Heart left ventricle (tissue), 16 donors: ENCODE measurements at regions of chrX and their contacts with region 1.

Region 1: DNA sequence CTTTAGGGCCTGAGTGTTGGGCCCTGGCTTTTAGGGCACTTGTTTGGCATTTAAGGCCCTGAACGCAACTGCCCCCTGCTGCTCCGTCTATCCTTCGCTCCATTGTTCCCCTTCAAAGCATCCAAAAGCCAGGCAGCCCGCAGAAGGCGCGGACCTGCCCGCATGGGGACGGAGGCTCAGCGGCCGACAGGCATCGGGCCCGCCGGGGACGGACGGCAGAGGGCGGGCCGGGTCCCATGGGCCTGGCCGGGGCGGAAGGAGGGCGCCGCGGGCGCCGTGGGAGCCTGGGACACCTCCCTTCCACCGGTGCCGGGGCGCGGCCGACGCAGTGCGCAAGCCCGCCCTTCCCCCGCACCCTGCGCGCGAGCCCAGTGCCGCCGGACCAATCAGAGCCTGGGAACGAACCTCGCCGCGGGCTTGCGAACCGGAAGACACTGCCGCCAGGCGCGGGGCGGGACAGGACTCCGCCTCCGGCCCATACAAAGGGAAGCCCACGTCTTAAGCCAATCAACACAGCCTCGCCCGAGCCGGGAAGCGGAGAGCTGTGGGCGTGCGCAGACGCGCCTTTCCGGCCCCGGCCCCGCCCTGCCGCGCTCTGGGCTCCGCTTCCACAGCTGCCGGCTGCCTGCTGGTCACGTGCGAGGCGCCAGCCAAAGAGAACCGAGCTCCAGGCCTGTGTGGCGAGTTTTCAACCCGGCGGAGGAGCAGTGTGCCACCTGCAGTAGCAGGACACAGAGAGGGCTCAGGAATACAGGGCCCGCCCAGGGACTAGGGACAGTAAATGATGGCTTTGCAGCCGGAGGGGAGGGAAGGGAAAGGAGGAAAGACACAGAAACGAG is 2.1 kb upstream of the ARHGAP4 start:
- DNase-seq: peak; percentile 94 to 98 (median 97)
- ATAC-seq: peak; percentile 93 to 97 (median 94)
- H3K4me3 ChIP-seq: peak overlapping the region; percentile 22 to 82 (median 62)
- H3K27ac ChIP-seq: peak overlapping the region; percentile 92 to 100 (median 96)
- H3K4me1 ChIP-seq: peaks cover 0 to 58% (median 22%) of the 10 kb centered on the region in 12 donors
- H3K27me3 ChIP-seq: peaks cover 0 to 15% (median 0%) of the 10 kb centered on the region in 9 donors
- CTCF ChIP-seq: peak in 8 of 12 donors; percentile 13 to 45 (median 22)
- POLR2A ChIP-seq: peak in 1 of 2 donors; percentile 78

Region 2: GRCh38 chrX:153724252-153725040 is 203.7 kb before region 1 on chrX and contains the starts of genes ABCD1 and BCAP31:
- intact Hi-C with region 1: loop called in 1 of 10 experiments (anchors 10 kb)
- DNase-seq: peak; percentile 90 to 94 (median 92)
- ATAC-seq: peak; percentile 73 to 86 (median 84)
- H3K4me3 ChIP-seq: peak within 1 kb of the TSS; percentile 49 to 95 (median 72)
- H3K27ac ChIP-seq: peak within 1 kb of the TSS; percentile 82 to 94 (median 90)
- H3K4me1 ChIP-seq: peaks cover 3 to 57% (median 41%) of the 10 kb centered on the region in 12 donors
- H3K27me3 ChIP-seq: peaks cover 0 to 6% (median 0%) of the 10 kb centered on the region in 9 donors
- CTCF ChIP-seq: no peak
- POLR2A ChIP-seq: peak in 1 of 2 donors; percentile 84
- total RNA-seq, gene ABCD1: 13.5 to 25.6 (median 17.6) TPM
- total RNA-seq, gene BCAP31: 59.9 to 162 (median 102) TPM

Region 3: DNA sequence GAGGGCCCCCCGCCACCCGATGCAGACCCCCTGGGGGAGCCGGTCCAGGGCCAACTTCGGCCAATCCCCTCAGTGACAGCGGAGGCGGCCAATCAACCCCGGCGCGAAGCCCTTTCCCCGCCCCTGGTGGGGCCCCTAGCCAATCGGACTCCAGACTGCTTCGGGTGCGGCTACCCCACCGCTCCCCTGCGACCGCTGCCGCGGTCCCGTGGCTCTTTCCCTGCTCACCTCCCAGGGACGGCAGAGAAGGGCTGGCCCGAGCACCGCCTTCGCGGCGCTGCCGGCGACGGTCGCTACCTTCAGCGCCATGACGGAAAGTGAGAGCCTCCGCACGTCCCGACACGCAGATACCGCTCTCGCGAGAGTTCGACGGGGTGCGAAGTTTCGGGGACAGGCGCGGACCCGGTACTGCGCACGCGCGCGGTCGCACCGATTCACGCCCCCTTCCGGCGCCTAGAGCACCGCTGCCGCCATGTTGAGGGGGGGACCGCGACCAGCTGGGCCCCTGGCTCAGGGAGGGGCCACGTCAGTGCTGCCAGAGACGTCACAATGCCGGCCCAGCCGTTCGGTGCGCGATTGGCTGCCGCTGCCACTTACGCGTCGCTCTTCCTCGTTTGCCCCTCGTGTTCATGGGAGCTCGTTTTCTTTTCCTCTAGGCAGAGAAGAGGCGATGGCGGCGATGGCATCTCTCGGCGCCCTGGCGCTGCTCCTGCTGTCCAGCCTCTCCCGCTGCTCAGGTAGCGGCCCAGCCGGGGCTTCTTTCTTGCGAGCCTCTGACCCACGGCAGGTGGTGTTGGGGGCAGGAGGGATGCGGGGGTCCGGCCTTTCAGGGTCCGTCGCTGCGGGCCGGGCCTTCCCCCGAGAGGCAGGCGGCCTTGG is 133.9 kb before region 1 on chrX and contains the starts of genes IDH3G and SSR4:
- intact Hi-C with region 1: loop called in 3 of 10 experiments (anchors 5 to 10 kb)
- DNase-seq: peak; percentile 92 to 96 (median 93)
- ATAC-seq: peak; percentile 94 to 97 (median 96)
- H3K4me3 ChIP-seq: peak within 1 kb of the TSS; percentile 46 to 91 (median 74)
- H3K27ac ChIP-seq: peak within 1 kb of the TSS; percentile 86 to 99 (median 96)
- H3K4me1 ChIP-seq: peaks cover 0 to 37% (median 20%) of the 10 kb centered on the region in 12 donors
- H3K27me3 ChIP-seq: peaks cover 0 to 4% (median 0%) of the 10 kb centered on the region in 9 donors
- CTCF ChIP-seq: peak in 8 of 12 donors; percentile 9 to 58 (median 33)
- POLR2A ChIP-seq: peak in 1 of 2 donors; percentile 46
- total RNA-seq, gene IDH3G: 58.1 to 162 (median 71.2) TPM
- total RNA-seq, gene SSR4: 119 to 225 (median 135) TPM

Region 4: GRCh38 chrX:153947009-153947769 is 19.0 kb after region 1 on chrX:
- intact Hi-C with region 1: loop called in 1 of 10 experiments (anchors 2 kb)
- DNase-seq: peak; percentile 62 to 87 (median 72)
- ATAC-seq: peak; percentile 53 to 77 (median 68)
- H3K4me3 ChIP-seq: no peak overlapping the region
- H3K27ac ChIP-seq: peak overlapping the region; percentile 35 to 86 (median 67)
- H3K4me1 ChIP-seq: peaks cover 0 to 36% (median 8%) of the 10 kb centered on the region in 12 donors
- H3K27me3 ChIP-seq: peaks cover 0 to 15% (median 0%) of the 10 kb centered on the region in 9 donors
- CTCF ChIP-seq: peak; percentile 67 to 95 (median 78)
- POLR2A ChIP-seq: no peak

Region 5: DNA sequence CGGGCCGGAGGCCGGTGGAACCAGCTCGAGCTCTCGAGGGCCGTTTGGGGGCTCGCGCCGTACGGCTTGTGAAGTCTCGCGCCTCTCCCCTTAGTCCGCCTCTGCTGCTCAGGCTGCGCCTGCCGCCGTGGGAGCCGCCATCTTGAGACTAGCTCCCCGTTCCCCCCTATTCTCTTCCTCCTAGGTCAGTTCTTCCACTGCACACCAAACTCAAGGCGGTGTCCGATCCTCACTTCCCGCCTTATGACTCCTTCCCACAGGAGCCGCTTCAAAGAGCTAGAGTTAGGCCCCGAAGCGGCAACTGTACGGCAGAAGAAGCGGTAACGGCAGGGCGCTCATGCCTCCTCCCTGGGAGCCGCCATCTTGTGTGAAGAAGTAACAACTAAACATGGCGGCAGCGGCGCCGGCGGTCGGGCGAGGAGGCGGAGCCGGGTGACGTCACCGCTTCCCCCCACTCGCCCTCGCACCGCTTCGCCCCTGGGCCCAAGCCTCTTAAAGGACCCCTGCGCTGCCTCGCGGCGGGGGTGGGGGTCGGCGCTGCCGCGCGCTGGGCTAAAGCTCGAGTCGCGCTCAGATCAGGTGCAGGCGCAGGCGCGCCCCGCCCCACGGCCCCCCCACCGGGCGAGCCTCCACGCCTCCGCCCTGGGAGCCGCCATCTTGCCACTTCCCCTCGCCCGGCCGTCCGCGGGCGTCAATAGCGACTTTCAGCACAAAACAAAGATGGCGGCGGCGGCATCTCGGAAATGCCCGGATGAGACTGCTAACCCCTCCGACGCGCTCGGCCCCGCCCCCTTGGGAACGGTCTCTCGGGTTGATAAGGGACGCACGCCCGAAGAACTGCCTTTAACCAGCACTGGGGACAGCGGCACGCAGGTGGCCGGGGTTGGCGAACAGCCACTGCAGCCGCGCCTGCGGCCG is 43.6 kb after region 1 on chrX and contains the start of gene HCFC1:
- intact Hi-C with region 1: loop called in 2 of 10 experiments (anchors 1 to 2 kb)
- DNase-seq: peak; percentile 91 to 97 (median 93)
- ATAC-seq: peak; percentile 56 to 76 (median 72)
- H3K4me3 ChIP-seq: peak within 1 kb of the TSS; percentile 43 to 95 (median 90)
- H3K27ac ChIP-seq: peak within 1 kb of the TSS; percentile 94 to 100 (median 100)
- H3K4me1 ChIP-seq: peaks cover 0 to 57% (median 37%) of the 10 kb centered on the region in 12 donors
- H3K27me3 ChIP-seq: peaks cover 0 to 8% (median 0%) of the 10 kb centered on the region in 9 donors
- CTCF ChIP-seq: no peak
- POLR2A ChIP-seq: peak; percentile 3 to 38
- total RNA-seq, gene HCFC1: 22.7 to 72.6 (median 34.8) TPM

Region 6: DNA sequence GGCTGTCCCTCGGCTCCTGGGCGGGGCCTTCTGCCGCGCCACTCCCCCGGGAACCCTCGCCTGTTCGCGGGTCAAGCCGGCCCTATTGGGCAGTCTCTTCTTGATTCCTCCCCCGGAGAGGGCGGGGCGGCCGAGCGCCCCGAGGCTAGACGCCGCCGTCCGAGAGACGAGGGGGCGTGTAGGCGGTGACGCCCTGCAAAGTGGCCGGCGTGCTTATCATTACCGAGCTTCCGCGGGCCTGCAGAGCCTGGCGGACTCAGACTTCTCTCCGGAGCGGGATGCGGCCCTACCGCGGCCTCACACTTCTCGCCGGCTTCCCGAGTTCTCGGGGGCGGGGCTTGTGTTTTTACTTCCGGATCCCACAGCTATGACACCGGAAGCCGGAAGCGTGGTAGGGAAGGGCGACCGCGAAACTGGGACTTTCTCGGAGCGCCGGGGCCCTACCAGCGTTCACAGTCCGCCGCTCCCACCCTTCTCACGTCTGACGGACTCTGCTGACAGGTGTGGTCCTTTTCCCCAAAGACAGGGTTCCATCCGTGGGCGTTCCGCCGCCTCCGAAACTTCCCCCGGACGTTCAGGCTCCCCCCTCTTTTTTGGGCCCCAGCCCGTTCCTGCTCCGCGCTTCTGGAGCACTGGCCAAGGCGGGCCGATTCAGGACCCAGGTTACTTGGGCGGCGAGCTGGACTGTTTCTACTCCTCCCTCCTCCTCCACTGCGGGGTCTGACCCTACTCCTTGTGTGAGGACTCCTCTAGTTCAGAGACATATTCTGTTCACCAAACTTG is 619.3 kb after region 1 on chrX and contains the start of gene IKBKG:
- intact Hi-C with region 1: no loop called
- DNase-seq: peak; percentile 91 to 94 (median 92)
- ATAC-seq: peak; percentile 94 to 96 (median 94)
- H3K4me3 ChIP-seq: peak within 1 kb of the TSS; percentile 59 to 89 (median 72)
- H3K27ac ChIP-seq: peak within 1 kb of the TSS; percentile 67 to 98 (median 90)
- H3K4me1 ChIP-seq: peaks cover 0 to 50% (median 12%) of the 10 kb centered on the region in 12 donors
- H3K27me3 ChIP-seq: peaks cover 0 to 2% (median 0%) of the 10 kb centered on the region in 9 donors
- CTCF ChIP-seq: no peak
- POLR2A ChIP-seq: peak in 1 of 2 donors; percentile 26
- total RNA-seq, gene IKBKG: 7.1 to 25.4 (median 15.3) TPM